MCF 10A (cell line): ENCODE measurements at regions of chr9 and their contacts with region 1.

Region 1: DNA sequence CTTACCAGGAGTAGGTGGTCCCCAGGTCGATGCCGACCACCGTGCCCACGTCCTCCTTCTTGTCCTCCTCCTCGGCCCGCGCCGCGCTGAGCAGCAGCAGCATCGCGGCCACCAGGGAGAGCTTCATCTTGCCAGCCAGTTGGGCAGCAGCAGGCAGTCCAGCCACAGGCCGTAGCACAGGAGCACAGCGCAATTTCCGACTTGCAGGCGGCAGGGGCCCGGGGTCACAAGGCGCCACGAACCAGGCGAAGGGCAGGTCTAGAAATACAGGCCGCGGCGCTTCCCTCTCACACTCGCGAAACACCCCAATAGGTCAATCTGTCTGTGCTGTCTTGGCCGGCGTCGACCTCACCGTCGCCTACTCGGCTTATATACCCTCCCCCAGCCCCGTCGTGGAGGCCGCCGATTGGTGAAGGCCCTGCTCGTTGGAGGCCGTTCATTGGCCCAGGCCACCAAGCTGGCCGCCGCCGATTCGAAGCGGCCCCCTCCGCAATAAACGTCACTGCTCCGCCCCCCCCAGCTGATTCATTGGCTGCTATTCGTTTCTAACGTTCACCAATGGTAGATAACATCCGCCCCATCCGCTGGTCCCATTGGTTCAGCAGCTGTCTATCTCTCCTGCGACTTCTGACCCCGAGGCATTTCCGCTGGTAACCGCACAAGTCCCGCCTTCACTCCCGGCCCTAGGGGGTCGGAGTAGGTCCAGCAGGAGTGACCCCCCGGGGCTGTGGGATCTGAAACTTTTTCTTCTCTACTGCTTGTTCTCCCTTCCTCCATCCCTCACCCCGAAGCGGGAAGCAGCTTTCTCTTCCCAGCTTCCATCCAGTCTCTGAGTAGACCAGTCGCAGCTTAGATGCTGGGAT is at the start of gene HSPA5:
- DNase-seq: peak; percentile 100
- H3K4me3 Mint-ChIP-seq: peak within 1 kb of the TSS; percentile 79
- H3K27ac Mint-ChIP-seq: peak within 1 kb of the TSS; percentile 90
- H3K4me1 Mint-ChIP-seq: peaks cover 27% of the 10 kb centered on the region
- H3K27me3 Mint-ChIP-seq: no peaks in the 10 kb centered on the region
- CTCF ChIP-seq: no peak
- total RNA-seq, gene HSPA5: 1,165 and 1,788 TPM in 2 replicates

Region 2: DNA sequence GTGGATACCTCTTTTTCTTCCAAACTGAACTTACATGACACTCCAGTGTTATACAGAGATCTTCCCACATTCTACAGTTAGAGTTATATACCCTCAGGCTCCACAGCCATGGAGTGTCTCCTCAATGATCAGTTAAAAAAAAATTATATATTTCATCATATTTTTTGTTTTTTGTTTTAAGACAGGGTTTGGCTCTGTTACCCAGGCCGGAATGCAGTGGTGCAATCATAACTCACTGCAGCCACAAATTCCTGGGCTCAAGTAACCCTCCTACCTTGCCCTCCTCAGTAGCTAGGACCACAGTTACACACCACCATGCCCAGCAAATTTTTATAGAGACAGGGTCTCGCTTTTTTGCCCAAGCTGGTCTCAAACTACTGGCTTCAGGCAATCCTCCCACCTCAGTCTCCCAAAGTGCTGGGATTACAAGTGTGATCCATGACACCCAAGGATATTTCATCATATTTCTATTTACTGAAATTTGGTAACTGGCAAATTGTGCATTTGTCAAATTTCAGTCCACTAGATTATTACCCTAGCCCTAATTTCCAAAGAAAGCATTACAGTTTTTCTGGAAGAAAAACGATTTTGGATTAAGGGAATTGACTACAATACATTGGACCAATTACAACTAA is 79.8 kb before region 1 on chr9:
- CTCF ChIA-PET with region 1: no interaction called
- POLR2A ChIA-PET with region 1: interaction called, 11 read pairs
- intact Hi-C with region 1: no loop called
- DNase-seq: peak; percentile 79
- H3K4me3 Mint-ChIP-seq: peak overlapping the region; percentile 22
- H3K27ac Mint-ChIP-seq: peak overlapping the region; percentile 78
- H3K4me1 Mint-ChIP-seq: peaks cover 13% of the 10 kb centered on the region
- H3K27me3 Mint-ChIP-seq: no peaks in the 10 kb centered on the region
- CTCF ChIP-seq: no peak

Region 3: GRCh38 chr9:125255781-125256391 is 14.7 kb after region 1 on chr9:
- CTCF ChIA-PET with region 1: interaction called, 14 read pairs
- POLR2A ChIA-PET with region 1: interaction called, 83 read pairs
- intact Hi-C with region 1: no loop called
- DNase-seq: peak; percentile 37
- H3K4me3 Mint-ChIP-seq: no peak overlapping the region
- H3K27ac Mint-ChIP-seq: no peak overlapping the region
- H3K4me1 Mint-ChIP-seq: peaks cover 3% of the 10 kb centered on the region
- H3K27me3 Mint-ChIP-seq: no peaks in the 10 kb centered on the region
- CTCF ChIP-seq: peak; percentile 23

Region 4: GRCh38 chr9:125325831-125326230 is 84.6 kb after region 1 on chr9:
- CTCF ChIA-PET with region 1: interaction called, 4 read pairs
- POLR2A ChIA-PET with region 1: interaction called, 101 read pairs
- intact Hi-C with region 1: loop called (anchors 2 kb)
- DNase-seq: peak; percentile 85
- H3K4me3 Mint-ChIP-seq: peak overlapping the region; percentile 18
- H3K27ac Mint-ChIP-seq: peak overlapping the region; percentile 23
- H3K4me1 Mint-ChIP-seq: peaks cover 22% of the 10 kb centered on the region
- H3K27me3 Mint-ChIP-seq: no peaks in the 10 kb centered on the region
- CTCF ChIP-seq: no peak